Activated T-helper 1 cell treated with anti-CD3 and anti-CD28 coated beads, Interleukin-12 subunit alpha, Interleukin-12 subunit beta, Interleukin-2, Interleukin-4 antibody, amounts not matched to agents 30 ng/mL and 10 ng/mL and 1 ng/mL, durations not matched to agents 14 hours and 24 hours and 36 hours (primary cell): ENCODE measurements at regions of chr11 and their contacts with region 1.

Region 1: GRCh38 chr11:91459840-91460239 is 764.8 kb upstream of the FAT3 start:
- DNase-seq: no peak
- H3K4me3 Mint-ChIP-seq: no peak overlapping the region
- H3K27ac Mint-ChIP-seq: no peak overlapping the region
- H3K4me1 Mint-ChIP-seq: no peaks in the 10 kb centered on the region
- H3K27me3 Mint-ChIP-seq: no peaks in the 10 kb centered on the region

Region 2: GRCh38 chr11:91406009-91406408 is 53.8 kb before region 1 on chr11:
- intact Hi-C with region 1: loop called (anchors 10 kb)
- DNase-seq: no peak
- H3K4me3 Mint-ChIP-seq: no peak overlapping the region
- H3K27ac Mint-ChIP-seq: no peak overlapping the region
- H3K4me1 Mint-ChIP-seq: no peaks in the 10 kb centered on the region
- H3K27me3 Mint-ChIP-seq: no peaks in the 10 kb centered on the region

Region 3: DNA sequence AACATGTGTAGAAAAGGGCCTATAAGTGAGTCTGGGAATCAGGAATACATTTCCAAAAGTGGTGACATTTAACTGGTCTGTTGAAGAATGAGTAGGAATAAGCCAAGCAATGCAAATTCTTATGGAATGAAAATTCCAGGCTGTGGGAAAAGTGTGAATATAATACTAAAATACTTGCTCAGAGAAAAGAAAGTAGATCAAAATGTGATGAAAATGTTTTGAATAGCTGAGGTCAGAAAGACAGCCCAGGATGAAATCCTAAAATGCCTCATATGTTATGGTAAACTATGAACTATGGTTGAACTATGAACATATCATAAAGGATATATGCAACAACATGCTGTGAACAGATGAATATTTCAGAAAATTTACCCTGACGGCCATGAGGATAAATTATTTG is 76.5 kb after region 1 on chr11:
- intact Hi-C with region 1: loop called (anchors 10 kb)
- DNase-seq: no peak
- H3K4me3 Mint-ChIP-seq: no peak overlapping the region
- H3K27ac Mint-ChIP-seq: no peak overlapping the region
- H3K4me1 Mint-ChIP-seq: no peaks in the 10 kb centered on the region
- H3K27me3 Mint-ChIP-seq: no peaks in the 10 kb centered on the region